ENCODE measurements at regions of chr5 and their contacts with region 1.

Region 1: GRCh38 chr5:155460501-155460931 is 447.0 kb downstream of the KIF4B start:
- DNase-seq: peak; percentile 91
- ATAC-seq: peak; percentile 96
- H3K4me3 ChIP-seq: peak overlapping the region in 1 of 3 experiments; percentile 18; a peak in 1 of 6 replicates
- H3K27ac ChIP-seq: peak overlapping the region; percentile 91
- H3K4me1 ChIP-seq: peaks cover 64% of the 10 kb centered on the region
- H3K27me3 ChIP-seq: no peaks in the 10 kb centered on the region
- CTCF ChIP-seq: no peak
- EP300 ChIP-seq: peak in 1 of 2 experiments; percentile 93; a peak in 3 of 4 replicates
- POLR2A ChIP-seq: no peak
- RAD21 ChIP-seq: no peak

Region 2: DNA sequence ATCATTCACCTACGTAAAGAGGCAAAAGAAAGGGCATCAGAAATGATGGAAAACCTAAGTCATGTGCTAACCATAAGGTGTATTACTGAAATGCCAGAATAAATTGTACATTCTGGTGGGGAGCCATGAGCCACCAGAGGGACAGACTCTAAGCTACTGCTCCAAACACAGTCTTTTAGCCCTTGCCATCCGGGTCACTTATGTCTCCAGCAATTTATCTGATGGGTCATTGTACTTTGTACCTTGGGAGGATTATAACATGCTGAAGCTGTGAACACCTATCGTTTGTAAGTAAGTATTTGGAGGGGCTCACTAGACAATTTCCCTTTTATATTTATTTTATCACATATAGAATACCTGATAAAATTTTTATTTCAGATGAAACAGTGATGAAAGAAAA is 48.2 kb after region 1 on chr5:
- CTCF ChIA-PET with region 1: no interaction called
- POLR2A ChIA-PET with region 1: interaction called, 13 read pairs
- in situ Hi-C with region 1: no loop called
- intact Hi-C with region 1: loop called (anchors 1 kb)
- DNase-seq: peak; percentile 48
- ATAC-seq: peak; percentile 86
- H3K4me3 ChIP-seq: no peak overlapping the region
- H3K27ac ChIP-seq: no peak overlapping the region
- H3K4me1 ChIP-seq: peaks cover 33% of the 10 kb centered on the region
- H3K27me3 ChIP-seq: no peaks in the 10 kb centered on the region
- CTCF ChIP-seq: no peak
- EP300 ChIP-seq: no peak
- POLR2A ChIP-seq: no peak
- RAD21 ChIP-seq: no peak

Region 3: GRCh38 chr5:155514105-155514563 is 53.6 kb after region 1 on chr5:
- CTCF ChIA-PET with region 1: no interaction called
- POLR2A ChIA-PET with region 1: interaction called, 13 read pairs
- in situ Hi-C with region 1: no loop called
- intact Hi-C with region 1: loop called (anchors 1 kb)
- DNase-seq: peak; percentile 94
- ATAC-seq: peak; percentile 100
- H3K4me3 ChIP-seq: peak overlapping the region in 2 of 3 experiments; percentile 30 to 41; a peak in 2 of 6 replicates
- H3K27ac ChIP-seq: peak overlapping the region; percentile 80
- H3K4me1 ChIP-seq: peaks cover 44% of the 10 kb centered on the region
- H3K27me3 ChIP-seq: no peaks in the 10 kb centered on the region
- CTCF ChIP-seq: no peak
- EP300 ChIP-seq: peak in 1 of 2 experiments; percentile 85; a peak in 2 of 4 replicates
- POLR2A ChIP-seq: peak; percentile 38 to 50; a peak in 2 of 4 replicates
- RAD21 ChIP-seq: no peak

Measured in HepG2 (cell line).